ENCODE measurements at regions of chr17 and their contacts with region 1.

Region 1: GRCh38 chr17:17919169-17920107 is 52.8 kb downstream of the TOM1L2 start:
- DNase-seq: peak; percentile 39
- ATAC-seq: peak; percentile 99
- H3K4me3 ChIP-seq: no peak overlapping the region
- H3K27ac ChIP-seq: no peak overlapping the region
- H3K4me1 ChIP-seq: peaks cover 11% of the 10 kb centered on the region
- H3K27me3 ChIP-seq: no peaks in the 10 kb centered on the region
- CTCF ChIP-seq: peak; percentile 76 to 89 (median 87)
- EP300 ChIP-seq: no peak
- POLR2A ChIP-seq: no peak
- RAD21 ChIP-seq: peak; percentile 98

Region 2: GRCh38 chr17:17186051-17186450 is 733.4 kb before region 1 on chr17:
- CTCF ChIA-PET with region 1: no interaction called
- POLR2A ChIA-PET with region 1: no interaction called
- RAD21 ChIA-PET with region 1: no interaction called
- SMC1A ChIA-PET with region 1: no interaction called
- in situ Hi-C with region 1: no loop called
- intact Hi-C with region 1: no loop called
- DNase-seq: no peak
- ATAC-seq: peak; percentile 60
- H3K4me3 ChIP-seq: no peak overlapping the region
- H3K27ac ChIP-seq: no peak overlapping the region
- H3K4me1 ChIP-seq: peaks cover 28% of the 10 kb centered on the region
- H3K27me3 ChIP-seq: no peaks in the 10 kb centered on the region
- CTCF ChIP-seq: no peak
- EP300 ChIP-seq: no peak
- POLR2A ChIP-seq: no peak
- RAD21 ChIP-seq: no peak

Region 3: GRCh38 chr17:17681187-17681848 is 238.1 kb before region 1 on chr17 and contains the start of gene RAI1:
- CTCF ChIA-PET with region 1: interaction called, 18 read pairs
- POLR2A ChIA-PET with region 1: interaction called, 7 read pairs
- RAD21 ChIA-PET with region 1: interaction called, 26 read pairs
- SMC1A ChIA-PET with region 1: interaction called, 11 read pairs
- in situ Hi-C with region 1: no loop called
- intact Hi-C with region 1: loop called (anchors 5 kb)
- DNase-seq: no peak
- ATAC-seq: peak; percentile 41
- H3K4me3 ChIP-seq: peak within 1 kb of the TSS; percentile 99
- H3K27ac ChIP-seq: peak within 1 kb of the TSS; percentile 90
- H3K4me1 ChIP-seq: peaks cover 30% of the 10 kb centered on the region
- H3K27me3 ChIP-seq: no peaks in the 10 kb centered on the region; a peak in 1 of 4 replicates
- CTCF ChIP-seq: peak; percentile 48 to 80 (median 63); a peak in 5 of 6 replicates
- EP300 ChIP-seq: no peak
- POLR2A ChIP-seq: no peak; the same call in 1 of the 2 replicates
- RAD21 ChIP-seq: peak; percentile 84
- polyA plus RNA-seq, gene RAI1: 0.66 to 0.74 TPM

Region 4: DNA sequence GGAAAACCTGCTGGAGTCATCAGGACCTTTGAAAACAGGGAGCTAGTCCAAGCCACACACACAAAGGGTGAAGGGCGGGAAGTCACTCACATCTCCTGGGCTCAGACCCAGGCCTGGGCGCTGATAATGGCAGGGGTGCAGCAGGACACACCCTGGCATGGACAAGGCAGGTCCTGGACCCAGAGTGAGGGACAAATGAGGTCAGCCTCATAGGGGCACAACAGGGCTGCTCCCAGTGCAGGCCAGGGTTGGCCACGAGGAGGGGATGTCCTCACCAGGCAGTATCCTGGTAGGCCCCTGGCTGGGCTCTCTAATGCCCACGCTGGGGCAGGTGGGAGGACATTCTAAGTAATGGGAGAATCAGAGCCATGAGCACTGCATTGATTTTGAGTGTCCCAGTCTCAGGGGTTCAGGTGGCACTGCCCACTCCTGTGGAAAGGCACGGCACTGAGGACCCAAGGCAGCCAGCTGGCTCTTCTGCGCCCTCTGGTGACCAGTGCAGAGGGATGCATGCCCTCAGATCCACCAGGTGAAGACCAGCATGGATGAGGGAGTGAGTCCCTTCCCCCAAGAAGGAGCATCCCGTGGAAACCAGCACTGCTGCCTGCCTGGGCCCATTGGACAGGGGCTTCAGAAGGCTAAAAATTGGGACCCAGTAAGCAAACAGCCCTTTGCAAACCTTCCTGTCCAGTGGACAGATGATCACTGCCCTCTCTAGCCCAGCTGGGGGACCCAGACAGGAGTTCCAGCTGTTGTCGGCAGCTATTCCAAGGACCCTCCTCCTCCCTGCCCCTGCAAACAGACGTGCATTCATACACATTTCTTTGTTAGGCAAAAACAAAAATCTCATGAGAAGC is 59.3 kb before region 1 on chr17:
- CTCF ChIA-PET with region 1: interaction called, 13 read pairs
- POLR2A ChIA-PET with region 1: no interaction called
- RAD21 ChIA-PET with region 1: interaction called, 14 read pairs
- SMC1A ChIA-PET with region 1: interaction called, 12 read pairs
- in situ Hi-C with region 1: no loop called
- intact Hi-C with region 1: loop called (anchors 5 kb)
- DNase-seq: no peak
- ATAC-seq: peak; percentile 99
- H3K4me3 ChIP-seq: no peak overlapping the region
- H3K27ac ChIP-seq: no peak overlapping the region
- H3K4me1 ChIP-seq: no peaks in the 10 kb centered on the region
- H3K27me3 ChIP-seq: no peaks in the 10 kb centered on the region
- CTCF ChIP-seq: peak; percentile 98; a peak in 5 of 6 replicates
- EP300 ChIP-seq: no peak
- POLR2A ChIP-seq: no peak
- RAD21 ChIP-seq: peak; percentile 96

Region 5: GRCh38 chr17:17890773-17891759 is 28.4 kb before region 1 on chr17:
- CTCF ChIA-PET with region 1: interaction called, 95 read pairs
- POLR2A ChIA-PET with region 1: interaction called, 5 read pairs
- RAD21 ChIA-PET with region 1: interaction called, 48 read pairs
- SMC1A ChIA-PET with region 1: interaction called, 42 read pairs
- in situ Hi-C with region 1: no loop called
- intact Hi-C with region 1: loop called (anchors 2 kb)
- DNase-seq: no peak
- ATAC-seq: peak; percentile 97
- H3K4me3 ChIP-seq: no peak overlapping the region
- H3K27ac ChIP-seq: no peak overlapping the region
- H3K4me1 ChIP-seq: peaks cover 19% of the 10 kb centered on the region
- H3K27me3 ChIP-seq: no peaks in the 10 kb centered on the region
- CTCF ChIP-seq: peak; percentile 71 to 83 (median 74)
- EP300 ChIP-seq: no peak
- POLR2A ChIP-seq: no peak
- RAD21 ChIP-seq: peak; percentile 85

Region 6: DNA sequence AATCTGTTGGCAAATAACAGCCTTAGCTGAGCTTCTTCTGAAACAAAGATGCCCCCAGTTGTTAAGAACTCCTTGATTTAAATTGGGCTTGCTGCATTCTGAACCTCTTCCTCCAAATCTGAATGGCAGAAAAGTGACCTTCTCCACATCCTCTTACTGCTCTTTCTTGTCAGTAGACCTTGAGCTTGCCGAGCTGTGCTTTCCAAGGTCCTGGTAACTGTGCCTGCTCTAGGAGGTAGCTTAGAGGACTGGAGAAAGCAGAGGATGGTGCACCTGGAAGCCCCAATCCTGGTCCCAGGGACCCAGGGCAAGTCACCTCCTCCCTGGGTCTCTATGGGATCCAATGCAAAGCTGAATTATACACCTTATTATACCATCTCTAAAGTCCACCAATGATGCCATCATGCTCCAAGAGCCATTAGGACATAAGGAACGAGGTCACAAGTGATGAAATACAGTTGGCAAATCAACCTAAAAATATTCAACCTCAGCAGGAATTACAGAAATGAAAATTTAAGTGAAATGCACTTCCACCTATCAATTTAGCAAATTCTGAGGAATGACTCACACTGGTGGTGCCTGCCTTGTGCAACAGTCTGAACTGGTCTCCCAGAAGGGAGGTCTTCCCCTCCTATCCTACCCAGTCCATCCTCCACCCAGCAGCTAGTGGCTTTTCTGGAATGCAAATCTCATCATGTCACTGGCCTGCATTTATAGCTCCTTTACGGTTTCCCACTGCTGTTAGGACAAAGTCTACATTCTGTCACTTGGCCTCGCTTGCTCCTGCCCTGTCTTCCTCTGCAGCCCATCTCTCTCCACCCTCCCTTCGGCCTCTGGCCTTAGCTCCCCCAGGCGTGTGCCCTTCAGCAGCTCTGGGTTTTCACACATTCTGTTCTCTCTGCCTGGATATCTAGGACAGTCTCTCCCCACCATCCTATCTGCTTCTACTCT is 16.2 kb after region 1 on chr17:
- CTCF ChIA-PET with region 1: interaction called, 14 read pairs
- POLR2A ChIA-PET with region 1: no interaction called
- RAD21 ChIA-PET with region 1: interaction called, 6 read pairs
- SMC1A ChIA-PET with region 1: interaction called, 10 read pairs
- in situ Hi-C with region 1: no loop called
- intact Hi-C with region 1: no loop called
- DNase-seq: no peak
- ATAC-seq: no peak
- H3K4me3 ChIP-seq: no peak overlapping the region
- H3K27ac ChIP-seq: no peak overlapping the region
- H3K4me1 ChIP-seq: peaks cover 7% of the 10 kb centered on the region; the same call in 1 of the 2 replicates
- H3K27me3 ChIP-seq: no peaks in the 10 kb centered on the region
- CTCF ChIP-seq: no peak
- EP300 ChIP-seq: no peak
- POLR2A ChIP-seq: no peak
- RAD21 ChIP-seq: no peak

Region 7: GRCh38 chr17:17972126-17972951 is 52.9 kb after region 1 on chr17 and contains the starts of genes DRC3 and TOM1L2:
- CTCF ChIA-PET with region 1: interaction called, 10 read pairs
- POLR2A ChIA-PET with region 1: no interaction called
- RAD21 ChIA-PET with region 1: interaction called, 20 read pairs
- SMC1A ChIA-PET with region 1: interaction called, 12 read pairs
- in situ Hi-C with region 1: no loop called
- intact Hi-C with region 1: no loop called
- DNase-seq: peak; percentile 100
- ATAC-seq: peak; percentile 96
- H3K4me3 ChIP-seq: peak within 1 kb of the TSS; percentile 76
- H3K27ac ChIP-seq: peak within 1 kb of the TSS; percentile 18; the same call in 1 of the 2 replicates
- H3K4me1 ChIP-seq: peaks cover 10% of the 10 kb centered on the region
- H3K27me3 ChIP-seq: no peaks in the 10 kb centered on the region
- CTCF ChIP-seq: no peak
- EP300 ChIP-seq: peak; percentile 29 to 31; a peak in 2 of 4 replicates
- POLR2A ChIP-seq: peak; percentile 66
- RAD21 ChIP-seq: no peak
- polyA plus RNA-seq, gene DRC3: 0.60 to 0.71 TPM
- polyA plus RNA-seq, gene TOM1L2: 0.19 to 0.42 TPM